Gastrocnemius medialis (tissue), 4 donors: ENCODE measurements at regions of chr1 and their contacts with region 1.

Region 1: GRCh38 chr1:174769961-174770549 is 229.7 kb upstream of the CACYBP start:
- DNase-seq: no peak
- ATAC-seq: no peak
- H3K4me3 ChIP-seq: no peak overlapping the region
- H3K27ac ChIP-seq: no peak overlapping the region
- H3K4me1 ChIP-seq: no peaks in the 10 kb centered on the region
- H3K27me3 ChIP-seq: no peaks in the 10 kb centered on the region
- CTCF ChIP-seq: peak in 4 of 5 experiments; percentile 33 to 65 (median 56)
- POLR2A ChIP-seq: no peak

Region 2: GRCh38 chr1:174051956-174052355 is 718.1 kb before region 1 on chr1:
- in situ Hi-C with region 1: no loop called
- intact Hi-C with region 1: no loop called
- DNase-seq: peak; percentile 3 to 27
- ATAC-seq: peak in 1 of 2 donors; percentile 61
- H3K4me3 ChIP-seq: no peak overlapping the region
- H3K27ac ChIP-seq: no peak overlapping the region
- H3K4me1 ChIP-seq: peaks cover 0 to 4% of the 10 kb centered on the region in 2 donors
- H3K27me3 ChIP-seq: no peaks in the 10 kb centered on the region
- CTCF ChIP-seq: no peak
- POLR2A ChIP-seq: no peak

Region 3: GRCh38 chr1:174724219-174724618 is 45.8 kb before region 1 on chr1:
- in situ Hi-C with region 1: no loop called
- intact Hi-C with region 1: no loop called
- DNase-seq: no peak
- ATAC-seq: no peak
- H3K4me3 ChIP-seq: no peak overlapping the region
- H3K27ac ChIP-seq: no peak overlapping the region
- H3K4me1 ChIP-seq: no peaks in the 10 kb centered on the region
- H3K27me3 ChIP-seq: no peaks in the 10 kb centered on the region
- CTCF ChIP-seq: no peak
- POLR2A ChIP-seq: no peak

Region 4: GRCh38 chr1:174815036-174815435 is 45.0 kb after region 1 on chr1:
- in situ Hi-C with region 1: no loop called
- intact Hi-C with region 1: no loop called
- DNase-seq: no peak
- ATAC-seq: no peak
- H3K4me3 ChIP-seq: no peak overlapping the region
- H3K27ac ChIP-seq: no peak overlapping the region
- H3K4me1 ChIP-seq: no peaks in the 10 kb centered on the region
- H3K27me3 ChIP-seq: no peaks in the 10 kb centered on the region
- CTCF ChIP-seq: no peak
- POLR2A ChIP-seq: no peak

Region 5: DNA sequence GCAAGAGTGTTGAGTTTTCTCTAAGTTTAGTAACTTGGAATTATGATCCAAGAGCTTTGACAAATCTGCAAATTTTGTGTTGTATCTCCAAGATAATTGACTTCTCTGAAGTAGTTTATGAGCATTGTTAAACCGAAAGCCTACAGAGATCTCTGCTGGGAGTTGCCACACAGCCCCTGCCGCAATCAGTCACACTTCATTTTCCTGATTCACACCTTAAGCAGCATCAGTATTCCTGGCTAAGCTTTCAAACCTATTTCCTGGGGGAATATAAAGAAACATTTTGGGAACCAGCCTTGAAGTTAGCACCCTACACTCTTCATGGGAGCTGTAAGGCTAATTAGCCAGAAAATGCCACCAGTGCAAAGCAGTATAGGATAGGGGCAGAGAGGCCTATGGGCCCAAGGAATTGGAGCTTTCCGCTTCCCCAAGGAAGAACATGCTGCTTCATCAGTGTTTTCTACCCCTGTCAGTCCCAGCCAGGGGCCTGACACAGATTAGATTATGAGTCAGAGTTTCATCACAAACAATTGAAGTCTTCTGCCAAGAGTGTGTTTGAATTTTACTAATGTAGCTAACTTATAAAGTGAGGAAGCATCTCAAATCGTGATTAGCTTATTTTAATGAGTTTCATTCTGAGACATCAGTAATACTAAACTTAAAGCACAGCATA is 206.5 kb after region 1 on chr1:
- in situ Hi-C with region 1: loop called in 3 of 4 experiments (anchors 5 to 10 kb)
- intact Hi-C with region 1: loop called (anchors 5 kb)
- DNase-seq: peak in 1 of 2 donors; percentile 32
- ATAC-seq: peak; percentile 66 to 81
- H3K4me3 ChIP-seq: no peak overlapping the region
- H3K27ac ChIP-seq: peak overlapping the region in 2 of 4 donors; percentile 33 to 51
- H3K4me1 ChIP-seq: no peaks in the 10 kb centered on the region
- H3K27me3 ChIP-seq: no peaks in the 10 kb centered on the region
- CTCF ChIP-seq: no peak
- POLR2A ChIP-seq: no peak

Region 6: DNA sequence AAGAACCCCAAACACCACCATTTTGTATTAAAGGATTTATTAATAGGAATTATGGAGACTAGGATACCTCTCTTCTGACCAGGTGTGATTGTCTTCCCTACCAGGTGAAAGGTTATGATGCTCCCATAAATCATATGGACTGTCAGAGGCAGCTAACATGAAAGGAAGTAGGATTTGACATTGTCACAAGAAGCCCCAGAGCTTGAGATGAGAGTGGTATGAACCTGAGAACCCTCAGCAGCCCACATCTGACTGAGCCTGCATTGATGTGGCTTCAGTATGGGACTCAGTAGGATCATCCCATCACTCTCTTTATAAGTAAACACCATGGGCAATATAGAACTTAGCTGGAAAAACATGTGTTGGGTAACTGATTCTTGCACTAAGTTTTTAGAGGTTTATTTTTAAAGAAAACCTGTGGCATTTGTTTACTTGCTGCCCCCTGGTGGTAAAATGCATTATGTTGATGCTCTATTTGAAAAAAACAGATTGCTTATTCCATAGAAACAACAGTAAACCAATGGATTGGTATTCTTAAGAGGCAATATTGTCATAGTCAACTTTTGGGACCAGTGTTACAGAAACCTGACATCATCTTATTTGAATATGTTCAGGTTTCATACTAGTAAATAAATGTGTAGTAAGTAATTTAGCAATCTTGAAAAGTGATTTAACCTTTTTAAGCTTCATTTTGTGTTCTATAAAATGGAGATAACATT is 213.1 kb after region 1 on chr1:
- in situ Hi-C with region 1: loop called (anchors 5 to 10 kb)
- intact Hi-C with region 1: loop called (anchors 5 kb)
- DNase-seq: no peak
- ATAC-seq: no peak
- H3K4me3 ChIP-seq: no peak overlapping the region
- H3K27ac ChIP-seq: no peak overlapping the region
- H3K4me1 ChIP-seq: no peaks in the 10 kb centered on the region
- H3K27me3 ChIP-seq: no peaks in the 10 kb centered on the region
- CTCF ChIP-seq: peak; percentile 44 to 65 (median 58)
- POLR2A ChIP-seq: no peak

Region 7: DNA sequence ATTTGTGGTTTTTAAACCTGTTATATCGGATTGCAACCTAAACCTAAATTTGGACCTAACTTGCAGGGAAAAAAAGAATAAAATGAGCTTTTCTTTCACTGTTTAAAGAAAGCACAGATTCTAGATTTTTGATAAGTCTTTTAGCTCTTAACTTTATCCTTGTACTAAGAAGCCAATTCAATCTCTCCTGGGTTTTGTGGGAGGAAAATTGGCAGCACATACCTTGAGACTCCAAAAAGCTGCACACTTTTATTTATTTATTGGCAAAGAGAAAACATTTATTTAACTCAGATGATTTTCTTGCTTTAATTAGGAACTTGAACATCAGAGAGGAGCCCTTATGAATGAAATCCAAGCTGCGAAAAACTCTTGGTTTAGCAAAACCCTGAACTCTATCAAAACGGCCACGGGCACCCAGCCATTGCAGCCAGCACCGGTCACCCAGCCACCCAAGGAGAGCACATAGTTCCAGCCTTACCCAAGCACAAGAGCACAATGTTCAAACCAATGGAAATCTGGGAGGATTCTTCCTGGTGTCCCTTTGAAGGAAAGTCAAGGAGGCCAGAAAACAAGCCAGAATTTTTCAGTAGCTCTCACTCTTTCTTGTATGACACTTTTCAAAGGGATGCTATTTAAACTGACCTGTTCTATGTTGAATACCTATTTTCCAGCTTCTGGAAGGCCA is 219.6 kb after region 1 on chr1:
- in situ Hi-C with region 1: loop called in 3 of 4 experiments (anchors 5 to 10 kb)
- intact Hi-C with region 1: loop called (anchors 5 kb)
- DNase-seq: no peak
- ATAC-seq: peak; percentile 38 to 57
- H3K4me3 ChIP-seq: peak overlapping the region; percentile 53 to 66 (median 58)
- H3K27ac ChIP-seq: peak overlapping the region; percentile 70 to 84 (median 72)
- H3K4me1 ChIP-seq: peaks cover 0 to 5% of the 10 kb centered on the region in 2 donors
- H3K27me3 ChIP-seq: no peaks in the 10 kb centered on the region
- CTCF ChIP-seq: no peak
- POLR2A ChIP-seq: no peak

Region 8: DNA sequence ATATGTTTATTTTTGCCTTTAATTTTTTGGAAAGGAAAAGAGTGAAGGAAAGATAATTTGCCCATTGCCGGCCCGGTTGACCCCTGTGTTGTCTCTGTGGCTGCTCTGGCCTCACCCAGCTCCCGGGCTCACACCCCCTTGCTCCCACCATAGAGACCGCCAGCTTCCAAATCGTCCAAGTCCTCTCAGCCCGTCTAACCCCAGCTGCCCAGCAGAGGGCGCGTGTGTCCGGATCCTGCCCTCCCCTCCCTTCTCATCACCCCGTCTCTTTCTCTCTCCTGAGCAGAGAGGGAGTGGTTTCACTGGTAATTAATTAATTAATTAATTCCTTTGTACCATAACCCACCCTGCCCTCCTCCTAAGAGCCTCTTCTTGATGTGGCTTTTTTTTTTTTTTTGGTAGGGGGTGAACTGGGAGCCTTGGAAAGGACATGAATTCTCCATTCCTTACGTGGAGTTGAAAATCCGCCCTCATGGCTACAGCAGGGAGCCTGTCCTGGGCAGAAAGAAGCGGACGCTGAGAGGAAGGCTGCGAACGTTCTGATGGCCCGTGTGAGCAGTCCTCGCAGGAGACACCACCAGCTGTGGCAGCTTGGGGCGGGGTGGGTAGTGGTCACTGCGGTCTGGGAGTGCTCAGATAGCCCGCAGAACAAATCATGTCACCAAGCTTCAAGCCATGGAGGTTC is 376.6 kb after region 1 on chr1:
- in situ Hi-C with region 1: no loop called
- intact Hi-C with region 1: loop called (anchors 10 kb)
- DNase-seq: peak; percentile 19 to 41
- ATAC-seq: peak; percentile 56 to 66
- H3K4me3 ChIP-seq: no peak overlapping the region
- H3K27ac ChIP-seq: no peak overlapping the region
- H3K4me1 ChIP-seq: peaks cover 0 to 6% of the 10 kb centered on the region in 2 donors
- H3K27me3 ChIP-seq: no peaks in the 10 kb centered on the region
- CTCF ChIP-seq: peak; percentile 43 to 80 (median 62)
- POLR2A ChIP-seq: no peak